WTC11 (cell line): ENCODE measurements at regions of chr4 and their contacts with region 1.

Region 1: DNA sequence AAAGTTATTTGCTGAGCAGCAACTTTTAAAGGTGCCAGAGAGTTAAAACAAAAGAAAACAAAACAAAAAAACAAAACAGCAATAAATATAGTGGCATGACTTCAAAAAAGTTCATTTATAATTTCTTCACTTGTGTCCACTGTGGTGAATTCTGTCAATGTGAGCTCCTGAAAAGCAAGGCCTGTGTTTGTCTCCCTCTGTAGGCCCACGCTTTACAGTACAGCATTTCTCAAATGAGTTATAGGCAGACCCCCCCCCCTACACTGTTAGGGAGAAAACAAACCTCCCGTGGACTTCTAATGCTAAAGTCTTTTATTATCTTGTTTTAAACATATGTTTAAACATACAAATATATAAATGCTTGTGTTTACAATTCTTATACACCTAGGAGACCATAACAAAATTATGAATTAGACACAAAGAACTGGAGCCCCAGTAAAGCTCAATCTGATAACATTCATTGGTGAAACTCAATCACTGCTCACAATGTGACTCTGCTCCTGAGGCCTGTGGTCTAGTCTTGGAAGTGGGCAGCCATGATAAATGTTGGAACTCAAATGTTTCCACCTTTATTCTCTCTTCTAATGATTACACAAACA is 47.0 kb upstream of the SCOC start:
- DNase-seq: no peak
- ATAC-seq: peak; percentile 87
- H3K4me3 Mint-ChIP-seq: no peak overlapping the region
- H3K27ac Mint-ChIP-seq: no peak overlapping the region
- H3K4me1 Mint-ChIP-seq: no peaks in the 10 kb centered on the region
- H3K27me3 Mint-ChIP-seq: peaks cover 19% of the 10 kb centered on the region
- CTCF ChIP-seq: no peak; the same call in 1 of the 2 replicates

Region 2: DNA sequence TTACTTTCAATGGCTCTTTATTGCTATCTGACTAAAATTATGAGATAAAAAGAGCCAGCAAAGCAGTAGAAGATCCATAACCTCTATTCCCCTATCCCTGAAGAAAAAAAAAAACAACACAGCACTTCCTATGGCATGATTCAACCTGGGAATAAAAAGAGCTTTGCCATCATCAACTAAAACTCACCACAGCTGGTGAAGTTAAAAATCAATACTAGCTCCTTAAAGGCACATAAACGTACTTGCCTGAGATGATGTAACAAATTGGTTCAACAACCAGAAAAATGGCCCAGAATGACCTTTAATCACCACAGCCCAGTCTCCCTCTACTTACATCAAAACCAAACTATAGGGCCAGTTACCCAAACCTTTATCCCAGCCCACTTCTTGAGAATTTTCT is 326.3 kb before region 1 on chr4:
- CTCF ChIA-PET with region 1: no interaction called
- POLR2A ChIA-PET with region 1: no interaction called
- DNase-seq: no peak
- ATAC-seq: no peak
- H3K4me3 Mint-ChIP-seq: no peak overlapping the region
- H3K27ac Mint-ChIP-seq: no peak overlapping the region
- H3K4me1 Mint-ChIP-seq: peaks cover 23% of the 10 kb centered on the region
- H3K27me3 Mint-ChIP-seq: no peaks in the 10 kb centered on the region; the same call in 1 of the 2 replicates
- CTCF ChIP-seq: no peak

Region 3: GRCh38 chr4:140012688-140013486 is 313.6 kb before region 1 on chr4:
- CTCF ChIA-PET with region 1: interaction called, 19 read pairs
- POLR2A ChIA-PET with region 1: no interaction called
- DNase-seq: peak; percentile 60
- ATAC-seq: peak; percentile 99
- H3K4me3 Mint-ChIP-seq: no peak overlapping the region
- H3K27ac Mint-ChIP-seq: peak overlapping the region; percentile 28
- H3K4me1 Mint-ChIP-seq: peaks cover 13% of the 10 kb centered on the region
- H3K27me3 Mint-ChIP-seq: no peaks in the 10 kb centered on the region
- CTCF ChIP-seq: no peak; the same call in 1 of the 2 replicates

Region 4: DNA sequence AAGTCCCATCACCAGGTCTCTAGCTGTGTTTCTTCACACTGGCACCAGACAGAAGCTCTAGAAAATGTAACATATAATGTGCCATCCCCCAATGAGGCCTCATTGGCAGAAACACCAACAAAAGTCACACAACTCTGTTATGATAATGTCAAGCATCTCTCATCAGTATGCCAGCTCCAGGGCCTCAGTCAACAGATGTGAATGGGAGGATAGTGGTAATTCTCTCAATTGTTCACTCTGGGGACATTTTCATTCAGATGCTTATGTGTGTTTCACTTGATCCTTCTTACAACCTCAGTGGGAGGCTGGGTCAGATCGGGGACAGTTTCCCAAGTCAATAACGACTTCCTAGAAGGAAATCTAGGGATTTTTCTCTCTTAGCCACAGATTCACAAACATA is 10.5 kb before region 1 on chr4:
- CTCF ChIA-PET with region 1: interaction called, 12 read pairs
- POLR2A ChIA-PET with region 1: no interaction called
- DNase-seq: no peak
- ATAC-seq: peak; percentile 98
- H3K4me3 Mint-ChIP-seq: no peak overlapping the region
- H3K27ac Mint-ChIP-seq: no peak overlapping the region
- H3K4me1 Mint-ChIP-seq: peaks cover 28% of the 10 kb centered on the region
- H3K27me3 Mint-ChIP-seq: peaks cover 91% of the 10 kb centered on the region
- CTCF ChIP-seq: no peak

Region 5: DNA sequence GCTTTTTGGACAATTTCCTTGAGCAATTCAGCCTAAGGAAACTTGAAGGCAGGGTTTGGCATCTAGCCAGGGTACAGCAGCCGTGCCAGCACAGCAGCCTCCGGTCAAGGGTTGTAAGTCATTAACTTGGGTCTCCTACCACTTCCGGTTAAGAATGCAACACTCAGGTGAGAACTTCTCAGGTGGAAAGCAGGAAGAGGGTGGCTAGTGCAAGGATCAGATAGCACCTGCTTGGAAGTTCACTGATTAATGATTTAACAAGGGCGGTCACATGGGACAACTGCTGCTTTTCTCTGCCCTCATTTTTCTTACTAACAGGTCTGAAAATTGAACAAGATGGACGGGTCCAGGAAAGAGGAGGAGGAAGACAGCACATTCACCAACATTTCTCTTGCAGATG is 16.8 kb after region 1 on chr4:
- CTCF ChIA-PET with region 1: interaction called, 15 read pairs
- POLR2A ChIA-PET with region 1: no interaction called
- DNase-seq: no peak
- ATAC-seq: no peak
- H3K4me3 Mint-ChIP-seq: no peak overlapping the region
- H3K27ac Mint-ChIP-seq: no peak overlapping the region
- H3K4me1 Mint-ChIP-seq: peaks cover 28% of the 10 kb centered on the region
- H3K27me3 Mint-ChIP-seq: no peaks in the 10 kb centered on the region
- CTCF ChIP-seq: no peak